H1 (cell line): ENCODE measurements at regions of chr17 and their contacts with region 1.

Region 1: GRCh38 chr17:10737168-10737622 is 7.4 kb upstream of the TMEM220 start:
- DNase-seq: peak in 1 of 2 experiments; percentile 66
- H3K4me3 ChIP-seq: no peak overlapping the region
- H3K27ac ChIP-seq: no peak overlapping the region
- H3K4me1 ChIP-seq: no peaks in the 10 kb centered on the region
- H3K27me3 ChIP-seq: no peaks in the 10 kb centered on the region
- CTCF ChIP-seq: peak; percentile 68 to 81 (median 80)
- EP300 ChIP-seq: no peak
- POLR2A ChIP-seq: no peak
- RAD21 ChIP-seq: peak; percentile 94

Region 2: GRCh38 chr17:10646392-10646990 is 90.7 kb before region 1 on chr17:
- CTCF ChIA-PET with region 1: interaction called, 13 read pairs
- POLR2A ChIA-PET with region 1: no interaction called
- DNase-seq: peak in 1 of 2 experiments; percentile 87
- H3K4me3 ChIP-seq: no peak overlapping the region
- H3K27ac ChIP-seq: no peak overlapping the region
- H3K4me1 ChIP-seq: no peaks in the 10 kb centered on the region
- H3K27me3 ChIP-seq: no peaks in the 10 kb centered on the region
- CTCF ChIP-seq: peak; percentile 72 to 86 (median 81)
- EP300 ChIP-seq: no peak
- POLR2A ChIP-seq: no peak
- RAD21 ChIP-seq: peak; percentile 76 to 83

Region 3: DNA sequence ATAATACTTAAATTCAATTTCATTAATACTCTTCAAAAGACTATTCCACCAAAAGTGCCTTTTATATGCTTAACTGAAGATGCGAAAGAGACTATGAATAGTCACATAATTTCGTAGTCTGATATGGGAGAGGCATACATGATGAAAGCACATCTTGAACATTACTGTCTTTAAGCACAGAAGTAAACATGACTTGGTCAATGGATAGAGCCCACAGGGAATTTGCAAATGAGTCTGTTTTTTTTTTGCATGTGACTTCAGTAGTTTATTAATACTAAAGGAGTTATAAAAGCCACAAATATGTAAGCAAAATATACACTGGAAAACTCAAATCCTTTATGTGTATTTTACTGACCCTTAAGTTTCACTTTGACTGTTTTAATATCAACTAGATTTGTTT is 23.9 kb before region 1 on chr17:
- CTCF ChIA-PET with region 1: no interaction called
- POLR2A ChIA-PET with region 1: no interaction called
- DNase-seq: no peak
- H3K4me3 ChIP-seq: no peak overlapping the region
- H3K27ac ChIP-seq: no peak overlapping the region
- H3K4me1 ChIP-seq: no peaks in the 10 kb centered on the region
- H3K27me3 ChIP-seq: no peaks in the 10 kb centered on the region
- CTCF ChIP-seq: no peak
- EP300 ChIP-seq: no peak
- POLR2A ChIP-seq: no peak
- RAD21 ChIP-seq: no peak

Region 4: DNA sequence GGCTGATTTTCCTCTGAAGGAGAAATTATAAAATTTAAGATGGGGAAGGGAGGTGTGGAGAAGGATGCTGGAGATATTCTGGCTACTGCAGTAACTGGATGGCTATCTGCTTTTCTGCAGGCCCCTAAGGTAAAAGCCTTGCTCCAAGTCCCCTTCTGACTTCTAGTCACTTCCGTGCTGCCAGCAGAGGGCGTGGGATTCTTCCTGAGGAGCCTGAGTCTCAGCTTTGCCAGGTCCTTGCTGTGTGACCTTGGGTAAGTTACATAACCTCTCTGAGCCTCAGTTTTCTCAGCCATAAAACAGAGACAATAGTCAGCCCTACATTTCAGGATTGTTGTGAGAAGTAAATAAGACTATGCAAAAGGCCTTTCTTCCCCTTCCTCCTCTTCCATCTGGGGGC is 16.9 kb after region 1 on chr17:
- CTCF ChIA-PET with region 1: interaction called, 44 read pairs
- POLR2A ChIA-PET with region 1: interaction called, 6 read pairs
- DNase-seq: peak in 1 of 2 experiments; percentile 78
- H3K4me3 ChIP-seq: peak overlapping the region in 1 of 4 experiments; percentile 57; a peak in 2 of 8 replicates
- H3K27ac ChIP-seq: no peak overlapping the region
- H3K4me1 ChIP-seq: peaks cover 9 to 20% (median 14%) of the 10 kb centered on the region in 4 experiments
- H3K27me3 ChIP-seq: no peaks in the 10 kb centered on the region
- CTCF ChIP-seq: peak; percentile 68 to 90 (median 77)
- EP300 ChIP-seq: no peak
- POLR2A ChIP-seq: no peak
- RAD21 ChIP-seq: peak; percentile 59 to 69

Region 5: GRCh38 chr17:10844621-10845387 is 107.6 kb after region 1 on chr17:
- CTCF ChIA-PET with region 1: interaction called, 88 read pairs
- POLR2A ChIA-PET with region 1: interaction called, 5 read pairs
- DNase-seq: peak; percentile 46 to 81
- H3K4me3 ChIP-seq: peak overlapping the region; percentile 32 to 69 (median 57)
- H3K27ac ChIP-seq: no peak overlapping the region
- H3K4me1 ChIP-seq: peaks cover 7 to 10% (median 7%) of the 10 kb centered on the region in 4 experiments; a peak in 6 of 7 replicates
- H3K27me3 ChIP-seq: peaks cover 0 to 2% (median 0%) of the 10 kb centered on the region in 4 experiments; a peak in 1 of 7 replicates
- CTCF ChIP-seq: peak; percentile 89 to 95 (median 91)
- EP300 ChIP-seq: no peak
- POLR2A ChIP-seq: no peak
- RAD21 ChIP-seq: peak; percentile 91 to 92

Region 6: DNA sequence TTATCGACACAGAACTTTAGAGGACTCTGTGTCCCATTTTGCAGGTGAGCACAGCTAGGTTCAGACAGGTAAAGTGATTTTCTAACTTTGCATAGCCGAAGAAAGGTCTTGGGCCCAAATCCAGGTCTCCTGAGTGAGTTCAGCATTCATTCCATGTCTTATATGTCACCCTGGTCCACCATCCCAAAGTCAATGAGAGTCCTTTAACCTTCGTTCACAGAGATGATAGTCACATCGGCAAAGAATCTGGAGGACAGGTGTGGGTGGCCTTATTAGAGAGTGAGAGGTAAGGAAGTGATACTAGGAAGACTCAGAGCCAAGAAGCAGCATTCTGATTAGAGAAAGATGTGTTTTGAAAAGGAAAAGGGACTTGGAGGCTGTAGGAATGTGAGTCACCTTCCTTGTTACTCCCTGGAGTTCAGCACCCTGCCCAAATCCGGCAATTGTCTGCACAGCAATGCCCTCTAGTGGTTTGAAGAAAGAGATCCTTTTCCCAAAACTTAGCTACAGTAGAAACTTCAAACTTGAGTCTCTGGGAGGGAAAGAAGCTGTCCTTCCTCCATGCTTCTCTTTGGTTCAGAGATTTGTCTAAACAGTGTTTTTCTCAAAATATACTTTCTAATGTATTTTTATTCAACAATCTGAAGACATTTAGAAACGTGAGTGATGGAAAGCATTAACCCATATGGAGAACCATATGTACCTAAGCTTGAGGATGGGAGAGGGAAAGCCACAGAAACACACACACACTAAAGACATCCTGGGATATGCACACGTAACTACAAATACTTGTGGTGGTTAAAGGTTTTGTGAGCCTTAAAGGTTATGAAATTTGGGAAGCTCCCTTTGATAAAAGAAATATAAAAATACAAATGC is 407.4 kb after region 1 on chr17:
- CTCF ChIA-PET with region 1: interaction called, 10 read pairs
- POLR2A ChIA-PET with region 1: no interaction called
- DNase-seq: peak; percentile 33 to 49
- H3K4me3 ChIP-seq: no peak overlapping the region
- H3K27ac ChIP-seq: no peak overlapping the region
- H3K4me1 ChIP-seq: no peaks in the 10 kb centered on the region
- H3K27me3 ChIP-seq: no peaks in the 10 kb centered on the region; a peak in 1 of 7 replicates
- CTCF ChIP-seq: peak; percentile 35 to 80 (median 78)
- EP300 ChIP-seq: no peak
- POLR2A ChIP-seq: no peak
- RAD21 ChIP-seq: peak; percentile 97